ENCODE measurements at regions of chrX and their contacts with region 1.

Region 1: DNA sequence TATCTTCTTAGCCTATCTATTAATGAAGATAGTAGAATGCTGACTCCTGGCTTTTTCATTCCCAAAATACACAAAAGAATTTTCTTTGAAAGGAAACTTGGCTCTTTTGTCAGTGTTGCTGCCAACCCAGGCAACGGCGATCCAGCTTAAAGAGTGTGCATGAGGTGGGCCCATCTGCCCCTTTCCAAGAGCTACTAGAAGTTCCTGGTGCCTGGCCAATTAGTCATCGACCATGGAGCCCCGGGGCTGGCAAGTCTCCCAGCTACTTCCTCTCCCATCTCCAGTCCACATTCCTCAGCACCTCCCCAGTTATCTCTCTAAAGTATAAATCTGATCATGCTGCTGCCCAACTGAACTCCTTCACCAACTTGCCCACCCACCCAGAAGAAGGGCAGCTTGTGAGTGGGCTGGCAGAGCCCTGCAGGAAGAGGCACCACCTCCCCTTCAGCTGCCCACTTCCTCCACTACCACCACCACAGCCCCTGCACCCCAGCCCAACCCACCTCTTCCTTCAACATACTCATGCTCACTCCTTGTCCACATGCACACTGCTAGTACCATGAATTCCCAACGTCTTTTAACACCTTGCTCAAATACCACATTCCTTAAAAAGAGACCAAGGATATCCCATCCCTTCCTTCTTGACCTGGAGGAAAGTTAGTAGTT is 158.2 kb upstream of the MAP3K15 start:
- DNase-seq: no peak
- H3K4me3 Mint-ChIP-seq: peak overlapping the region; percentile 8
- H3K27ac Mint-ChIP-seq: no peak overlapping the region
- H3K4me1 Mint-ChIP-seq: peaks cover 37% of the 10 kb centered on the region
- H3K27me3 Mint-ChIP-seq: no peaks in the 10 kb centered on the region

Region 2: GRCh38 chrX:19659925-19660324 is 13.6 kb before region 1 on chrX:
- intact Hi-C with region 1: loop called (anchors 2 kb)
- DNase-seq: no peak
- H3K4me3 Mint-ChIP-seq: no peak overlapping the region
- H3K27ac Mint-ChIP-seq: no peak overlapping the region
- H3K4me1 Mint-ChIP-seq: peaks cover 16% of the 10 kb centered on the region
- H3K27me3 Mint-ChIP-seq: no peaks in the 10 kb centered on the region

Measured in activated CD4-positive, alpha-beta T cell treated with anti-CD3 and anti-CD28 coated beads, Interleukin-2, amount 10 ng/mL, durations not matched to agents 24 days and 14 days (primary cell).